Tibial artery (tissue), 4 donors: ENCODE measurements at regions of chr1 and their contacts with region 1.

Region 1: GRCh38 chr1:113835642-113836307 is 23.5 kb upstream of the RSBN1 start:
- DNase-seq: no peak
- H3K4me3 ChIP-seq: no peak overlapping the region
- H3K27ac ChIP-seq: no peak overlapping the region
- H3K4me1 ChIP-seq: no peaks in the 10 kb centered on the region
- H3K27me3 ChIP-seq: no peaks in the 10 kb centered on the region
- CTCF ChIP-seq: peak; percentile 62 to 65

Region 2: DNA sequence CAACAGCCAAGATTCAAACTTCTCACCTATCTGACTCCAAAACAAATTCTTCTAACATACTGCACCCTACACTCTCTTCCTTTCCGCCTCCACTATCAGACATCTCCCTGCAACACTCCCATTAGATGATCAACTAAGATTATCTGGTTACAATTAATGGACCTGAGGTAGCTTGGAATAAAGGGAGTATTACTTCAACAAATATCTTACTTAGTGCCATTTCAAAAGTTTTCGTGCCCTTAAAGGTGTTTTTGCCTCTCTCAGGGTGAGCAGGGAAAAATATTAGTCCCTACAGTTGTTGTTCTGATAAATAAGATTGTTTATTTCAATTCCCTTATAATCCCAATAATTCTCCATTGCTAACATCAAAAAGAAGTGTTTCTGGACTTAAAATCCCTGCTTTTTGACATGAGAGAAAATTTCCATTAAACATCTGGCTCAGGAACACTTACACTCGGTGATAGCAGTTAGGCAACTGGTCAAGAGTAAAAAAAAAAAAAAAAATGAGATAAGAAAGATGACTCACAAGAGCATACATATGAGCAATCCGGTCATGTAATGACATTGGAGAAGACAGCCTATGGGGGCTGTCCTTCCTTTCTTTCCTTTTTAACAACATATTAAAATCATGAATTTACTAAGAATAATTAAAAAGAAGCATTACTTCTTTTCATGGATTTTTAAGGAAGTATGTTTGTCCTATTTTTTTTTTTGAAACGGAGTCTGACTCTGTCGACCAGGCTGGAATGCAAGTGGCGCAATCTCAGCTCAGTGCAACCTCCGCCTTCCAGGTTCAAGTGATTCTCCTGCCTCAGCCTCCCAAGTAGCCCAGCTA is 31.1 kb before region 1 on chr1:
- intact Hi-C with region 1: no loop called
- DNase-seq: no peak
- H3K4me3 ChIP-seq: no peak overlapping the region
- H3K27ac ChIP-seq: peak overlapping the region in 1 of 2 donors; percentile 1
- H3K4me1 ChIP-seq: peaks cover 0 to 70% (median 11%) of the 10 kb centered on the region in 4 donors
- H3K27me3 ChIP-seq: no peaks in the 10 kb centered on the region
- CTCF ChIP-seq: no peak

Region 3: GRCh38 chr1:113928941-113929749 is 93.4 kb after region 1 on chr1 and contains the start of gene HIPK1:
- intact Hi-C with region 1: loop called (anchors 10 kb)
- DNase-seq: peak; percentile 93 to 96
- H3K4me3 ChIP-seq: peak within 1 kb of the TSS; percentile 79 to 97
- H3K27ac ChIP-seq: peak within 1 kb of the TSS; percentile 98
- H3K4me1 ChIP-seq: peaks cover 0 to 50% (median 27%) of the 10 kb centered on the region in 4 donors
- H3K27me3 ChIP-seq: no peaks in the 10 kb centered on the region
- CTCF ChIP-seq: peak in 1 of 2 experiments; percentile 51

Region 4: DNA sequence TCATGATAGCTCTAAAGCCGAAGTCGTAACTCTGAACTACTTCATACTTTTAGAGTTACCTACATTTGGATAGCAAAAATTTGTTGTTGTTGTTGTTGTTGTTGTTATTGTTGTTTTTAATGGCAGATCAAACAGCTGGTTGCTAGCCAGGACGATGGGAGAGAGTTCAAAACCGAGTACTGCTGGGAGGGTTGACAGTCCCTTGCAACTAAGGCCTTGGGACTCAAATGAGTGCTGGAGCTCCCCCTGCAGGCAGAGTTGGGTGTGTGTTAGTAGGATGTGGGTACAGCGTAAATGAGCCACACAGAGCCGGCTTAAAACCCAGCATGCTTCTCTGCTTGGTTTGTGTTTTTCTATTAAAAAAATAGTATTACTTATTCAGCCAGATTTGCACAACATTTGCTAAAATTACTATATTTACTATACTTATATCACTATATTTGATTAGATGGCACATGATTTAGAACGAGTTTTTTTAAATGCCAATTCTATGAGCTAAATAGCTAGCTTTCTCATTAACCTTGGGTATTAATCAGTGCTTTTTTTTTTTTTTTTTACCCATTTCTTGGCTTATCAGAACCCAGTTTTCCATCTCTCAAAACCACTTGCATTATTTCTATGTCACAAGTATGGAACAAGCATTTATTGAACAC is 447.1 kb after region 1 on chr1:
- intact Hi-C with region 1: loop called (anchors 10 kb)
- DNase-seq: peak; percentile 89 to 92
- H3K4me3 ChIP-seq: no peak overlapping the region
- H3K27ac ChIP-seq: no peak overlapping the region
- H3K4me1 ChIP-seq: no peaks in the 10 kb centered on the region
- H3K27me3 ChIP-seq: no peaks in the 10 kb centered on the region
- CTCF ChIP-seq: peak; percentile 81 to 84